Activated CD8-positive, alpha-beta memory T cell treated with anti-CD3 and anti-CD28 coated beads, Interleukin-2, amount 10 ng/mL, durations not matched to agents 7 days and 5 days (primary cell): ENCODE measurements at regions of chr12 and their contacts with region 1.

Region 1: DNA sequence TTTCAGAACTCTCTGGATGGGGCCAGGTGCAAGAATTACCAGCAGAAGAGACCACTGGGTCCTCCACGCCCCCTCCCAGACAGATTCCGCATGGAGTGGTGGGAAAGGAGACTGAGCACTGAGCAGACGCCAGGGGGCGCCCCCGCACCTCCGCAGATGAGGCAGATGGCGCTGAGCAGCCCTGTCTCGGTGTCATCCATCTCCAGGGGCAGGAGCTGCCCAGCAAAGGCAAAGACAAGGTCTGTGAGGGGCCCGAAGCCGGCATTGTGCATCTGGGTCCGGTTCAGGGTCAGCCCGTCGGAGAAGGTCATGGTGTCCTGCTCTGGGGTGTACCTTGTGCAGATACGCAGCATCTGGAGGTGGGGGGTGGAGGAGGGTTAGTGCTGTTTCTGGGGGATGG is 6.3 kb upstream of the ITGB7 start:
- DNase-seq: peak; percentile 88
- ATAC-seq: peak; percentile 73
- H3K4me3 Mint-ChIP-seq: no peak overlapping the region
- H3K27ac Mint-ChIP-seq: no peak overlapping the region
- H3K4me1 Mint-ChIP-seq: peaks cover 73% of the 10 kb centered on the region
- H3K27me3 Mint-ChIP-seq: no peaks in the 10 kb centered on the region

Region 2: DNA sequence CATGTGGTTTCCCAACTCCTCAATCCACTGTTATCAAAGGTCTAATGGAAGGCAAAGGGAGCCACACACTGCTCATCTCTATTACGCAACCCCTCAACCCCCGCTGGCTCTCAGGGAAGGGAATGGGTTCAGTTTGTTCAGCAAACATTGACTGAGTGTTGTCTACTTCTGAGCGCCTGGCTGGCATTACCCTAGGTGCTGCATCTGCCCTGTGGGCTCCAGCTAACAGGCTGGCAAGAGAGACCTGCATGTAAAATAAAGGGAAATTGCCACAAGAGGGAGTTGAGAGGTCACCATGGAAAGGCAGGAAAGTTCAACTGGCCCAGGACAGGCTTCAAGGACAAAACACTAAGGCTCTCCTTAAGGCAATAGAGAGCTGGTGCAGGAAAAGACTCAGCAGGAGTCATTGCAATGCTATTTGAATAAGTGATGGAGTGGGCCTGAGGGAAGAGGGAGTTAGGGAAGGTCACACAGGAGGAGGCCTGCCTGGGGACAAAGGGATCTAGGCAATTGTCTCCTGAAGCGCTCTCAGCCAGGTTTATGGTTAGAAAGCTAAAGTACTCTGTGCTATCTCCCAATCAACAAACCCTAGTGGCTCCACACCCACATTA is 38.4 kb before region 1 on chr12:
- CTCF ChIA-PET with region 1: interaction called, 33 read pairs
- DNase-seq: no peak
- ATAC-seq: no peak
- H3K4me3 Mint-ChIP-seq: no peak overlapping the region
- H3K27ac Mint-ChIP-seq: no peak overlapping the region
- H3K4me1 Mint-ChIP-seq: peaks cover 26% of the 10 kb centered on the region
- H3K27me3 Mint-ChIP-seq: no peaks in the 10 kb centered on the region

Region 3: GRCh38 chr12:53200458-53201176 is 12.7 kb before region 1 on chr12:
- CTCF ChIA-PET with region 1: interaction called, 164 read pairs
- DNase-seq: peak; percentile 75
- ATAC-seq: peak; percentile 35
- H3K4me3 Mint-ChIP-seq: peak overlapping the region; percentile 76
- H3K27ac Mint-ChIP-seq: peak overlapping the region; percentile 94
- H3K4me1 Mint-ChIP-seq: peaks cover 80% of the 10 kb centered on the region
- H3K27me3 Mint-ChIP-seq: no peaks in the 10 kb centered on the region

Region 4: GRCh38 chr12:53241623-53242412 is 28.5 kb after region 1 on chr12:
- CTCF ChIA-PET with region 1: interaction called, 60 read pairs
- DNase-seq: no peak
- ATAC-seq: no peak
- H3K4me3 Mint-ChIP-seq: no peak overlapping the region
- H3K27ac Mint-ChIP-seq: no peak overlapping the region
- H3K4me1 Mint-ChIP-seq: peaks cover 11% of the 10 kb centered on the region
- H3K27me3 Mint-ChIP-seq: peaks cover 28% of the 10 kb centered on the region

Region 5: DNA sequence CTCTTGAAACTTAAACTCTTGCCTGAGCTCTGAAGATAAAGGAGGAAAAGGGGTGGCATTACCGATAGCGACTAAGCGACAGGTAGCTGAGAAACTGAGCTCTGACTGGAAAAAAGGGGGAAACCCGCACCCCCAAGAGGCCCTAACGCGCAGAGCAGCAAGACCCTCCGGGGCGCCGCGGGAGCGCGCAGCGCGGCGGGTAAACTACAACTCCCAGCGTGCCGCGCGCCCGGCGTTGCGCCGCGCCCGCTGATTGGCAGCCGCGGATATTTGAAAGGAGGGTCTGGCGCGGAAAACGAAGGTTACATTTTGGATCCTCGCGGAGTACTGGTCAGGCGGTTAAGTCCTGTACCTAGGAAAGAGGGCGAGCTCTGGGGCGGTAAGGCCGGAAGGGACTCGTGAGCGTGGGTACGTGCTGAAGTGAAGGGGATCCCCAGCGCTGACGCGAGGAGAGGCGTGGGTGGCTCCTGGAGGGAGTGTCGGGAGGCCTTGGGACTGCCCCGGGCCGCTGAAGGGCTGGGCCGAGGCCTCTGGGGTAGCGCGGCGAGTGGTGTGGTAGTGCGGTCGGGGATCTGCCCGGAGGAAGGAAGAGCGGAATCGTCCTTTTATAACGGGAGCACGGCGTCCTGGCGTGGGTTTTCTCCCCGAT is 54.8 kb after region 1 on chr12 and contains the start of gene ESPL1:
- CTCF ChIA-PET with region 1: interaction called, 248 read pairs
- DNase-seq: peak; percentile 92
- ATAC-seq: peak; percentile 96
- H3K4me3 Mint-ChIP-seq: peak within 1 kb of the TSS; percentile 100
- H3K27ac Mint-ChIP-seq: peak within 1 kb of the TSS; percentile 95
- H3K4me1 Mint-ChIP-seq: peaks cover 46% of the 10 kb centered on the region
- H3K27me3 Mint-ChIP-seq: no peaks in the 10 kb centered on the region
- total RNA-seq, gene ESPL1: 99.0 to 137 TPM

Region 6: DNA sequence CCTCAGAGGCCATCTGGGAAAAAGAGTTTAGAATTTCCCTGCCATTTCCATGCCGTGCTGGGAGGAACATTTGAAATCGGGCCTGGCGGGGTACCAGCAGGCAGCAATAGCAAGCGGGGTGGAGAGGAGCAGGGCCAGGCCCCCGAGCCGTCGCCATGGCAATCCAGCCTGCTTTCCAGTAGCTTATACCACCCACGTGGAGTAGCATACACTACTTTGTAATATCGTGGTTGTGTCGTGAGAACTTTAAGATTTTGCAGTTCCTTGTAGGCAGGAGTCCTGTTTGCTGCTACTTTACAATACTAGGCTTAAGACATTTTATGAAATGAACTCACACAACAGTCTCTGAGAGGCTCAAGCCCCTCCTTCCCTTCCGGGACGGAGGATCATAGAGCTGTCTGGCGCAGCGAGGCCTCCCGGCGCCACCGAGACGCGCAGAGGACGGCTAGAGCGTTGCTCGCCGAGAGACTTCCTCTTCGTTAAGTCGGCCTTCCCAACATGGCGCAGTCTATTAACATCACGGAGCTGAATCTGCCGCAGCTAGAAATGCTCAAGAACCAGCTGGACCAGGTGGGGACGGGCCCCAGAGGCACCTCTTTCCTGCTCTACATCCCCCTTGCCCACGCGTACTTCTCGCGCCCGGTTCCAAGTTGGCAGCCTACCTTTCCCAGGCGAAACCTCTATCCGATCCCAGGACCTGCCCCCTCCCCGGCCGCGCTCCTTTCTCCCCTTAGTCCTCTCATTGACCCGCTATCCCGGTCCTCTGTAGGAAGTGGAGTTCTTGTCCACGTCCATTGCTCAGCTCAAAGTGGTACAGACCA is 81.9 kb after region 1 on chr12 and contains the start of gene PFDN5:
- CTCF ChIA-PET with region 1: interaction called, 30 read pairs
- DNase-seq: peak; percentile 93
- ATAC-seq: peak; percentile 88
- H3K4me3 Mint-ChIP-seq: peak within 1 kb of the TSS; percentile 98
- H3K27ac Mint-ChIP-seq: peak within 1 kb of the TSS; percentile 92
- H3K4me1 Mint-ChIP-seq: peaks cover 49% of the 10 kb centered on the region
- H3K27me3 Mint-ChIP-seq: no peaks in the 10 kb centered on the region
- total RNA-seq, gene PFDN5: 283 to 298 TPM